Right cardiac atrium (tissue), 5 donors: ENCODE measurements at regions of chr12 and their contacts with region 1.

Region 1: DNA sequence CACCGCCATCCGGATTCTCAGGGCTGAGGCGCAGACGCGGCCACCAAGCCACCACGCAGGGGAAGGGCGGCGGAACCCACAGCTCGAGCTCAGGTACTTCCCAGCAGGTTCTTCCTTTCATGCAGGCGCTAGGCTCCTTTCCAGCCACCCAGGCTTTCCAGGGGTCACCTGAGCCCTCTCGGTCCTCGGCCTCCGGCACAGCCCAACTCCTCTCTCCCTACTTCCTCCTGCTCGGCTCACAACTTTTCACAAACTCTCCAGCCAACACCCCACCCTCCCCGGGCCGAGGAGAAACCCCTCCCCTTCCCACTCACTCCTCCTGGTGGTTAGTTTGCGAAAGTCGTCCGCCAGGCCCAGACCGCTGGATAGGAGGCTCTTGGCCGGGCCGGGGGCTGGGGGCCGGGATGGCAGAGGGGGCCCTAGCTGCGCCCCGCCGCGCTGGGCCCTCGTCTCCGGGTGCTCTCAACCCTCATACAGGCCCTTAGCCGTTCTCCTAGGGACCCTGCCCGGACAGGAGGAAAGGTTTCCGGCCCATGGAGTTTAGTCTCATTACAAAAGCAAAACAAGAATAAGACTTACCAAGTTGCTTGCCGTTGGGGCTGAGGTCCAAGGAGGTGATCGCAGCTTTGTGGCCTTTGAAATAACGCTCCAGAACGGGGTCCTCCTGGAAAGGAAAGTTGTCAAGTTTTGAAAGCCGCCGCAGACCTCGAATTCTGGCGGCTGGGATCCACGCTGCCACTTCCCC is at the start of gene GALNT4:
- DNase-seq: peak; percentile 87 to 94 (median 93)
- ATAC-seq: peak; percentile 94 to 96
- H3K4me3 ChIP-seq: peak within 1 kb of the TSS; percentile 95
- H3K27ac ChIP-seq: peak within 1 kb of the TSS; percentile 92
- H3K4me1 ChIP-seq: peaks cover 3% of the 10 kb centered on the region
- H3K27me3 ChIP-seq: no peaks in the 10 kb centered on the region
- total RNA-seq, gene GALNT4: 3.3 to 5.2 (median 4.0) TPM

Region 2: GRCh38 chr12:89019408-89020120 is 505.1 kb before region 1 on chr12:
- intact Hi-C with region 1: loop called (anchors 2 to 10 kb)
- DNase-seq: peak; percentile 65 to 74 (median 66)
- ATAC-seq: peak; percentile 96 to 97
- H3K4me3 ChIP-seq: peak overlapping the region; percentile 60
- H3K27ac ChIP-seq: no peak overlapping the region
- H3K4me1 ChIP-seq: no peaks in the 10 kb centered on the region
- H3K27me3 ChIP-seq: no peaks in the 10 kb centered on the region

Region 3: DNA sequence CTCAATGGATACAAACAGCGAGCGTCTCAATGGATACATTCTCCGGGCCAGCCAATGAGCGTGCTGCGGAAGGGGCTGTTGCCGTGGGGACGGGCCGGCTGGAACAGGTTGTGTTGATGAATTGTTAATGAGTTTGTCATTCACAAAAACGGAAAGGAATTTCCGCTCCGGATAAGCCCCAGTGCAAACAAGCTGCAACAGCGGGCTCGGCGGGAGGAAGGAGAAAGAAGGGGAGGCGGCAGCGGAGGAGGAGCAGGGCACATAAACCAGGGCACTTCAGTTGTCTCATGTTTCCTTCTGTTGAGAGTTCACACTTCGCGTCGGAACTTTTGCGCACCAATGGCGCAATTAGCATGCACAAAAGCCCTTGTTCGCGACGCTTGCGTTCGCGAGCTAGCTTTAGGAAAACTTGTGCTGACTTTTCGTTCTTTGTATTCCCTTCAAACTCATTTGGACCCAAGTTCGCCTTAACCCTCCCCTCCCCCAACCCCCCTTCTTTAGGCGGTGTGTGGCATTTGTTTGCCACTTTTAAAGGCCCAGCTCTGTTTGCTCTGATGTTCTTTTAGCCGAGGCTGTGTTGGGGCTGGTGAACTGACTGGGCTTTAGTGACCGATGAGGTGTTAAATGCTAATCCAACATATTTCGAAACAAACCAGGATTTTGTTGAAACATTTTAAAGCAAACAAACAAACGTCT is 172.1 kb before region 1 on chr12 and contains the start of gene DUSP6:
- intact Hi-C with region 1: loop called in 1 of 4 experiments (anchors 10 kb)
- DNase-seq: peak; percentile 94 to 96 (median 96)
- ATAC-seq: peak; percentile 84 to 88
- H3K4me3 ChIP-seq: peak within 1 kb of the TSS; percentile 60
- H3K27ac ChIP-seq: peak within 1 kb of the TSS; percentile 88
- H3K4me1 ChIP-seq: peaks cover 3% of the 10 kb centered on the region
- H3K27me3 ChIP-seq: no peaks in the 10 kb centered on the region
- total RNA-seq, gene DUSP6: 18.6 to 27.8 (median 24.1) TPM

Region 4: DNA sequence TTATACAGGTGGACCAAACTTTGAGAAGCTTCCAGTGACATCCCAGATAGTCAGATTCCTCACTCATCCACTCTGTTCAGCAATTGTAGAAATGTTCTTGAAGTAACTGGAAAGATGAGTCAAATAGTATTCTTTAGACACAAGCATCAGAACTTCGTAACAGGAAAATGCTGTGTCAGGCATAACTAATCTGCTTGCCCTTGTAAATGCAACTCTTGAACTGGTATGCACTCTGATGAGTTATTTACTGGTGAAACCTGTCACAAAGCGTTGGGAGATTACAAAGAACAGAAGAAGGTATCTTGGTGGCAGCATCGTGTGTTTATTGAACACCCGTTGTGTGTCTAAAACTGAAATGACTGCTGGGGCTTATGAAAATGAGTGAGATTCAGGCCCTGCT is 161.6 kb before region 1 on chr12:
- intact Hi-C with region 1: loop called in 2 of 4 experiments (anchors 10 kb)
- DNase-seq: no peak
- ATAC-seq: peak; percentile 38 to 41
- H3K4me3 ChIP-seq: no peak overlapping the region
- H3K27ac ChIP-seq: peak overlapping the region; percentile 61
- H3K4me1 ChIP-seq: peaks cover 2% of the 10 kb centered on the region
- H3K27me3 ChIP-seq: no peaks in the 10 kb centered on the region

Region 5: GRCh38 chr12:89470741-89471509 is 53.8 kb before region 1 on chr12:
- intact Hi-C with region 1: loop called in 3 of 4 experiments (anchors 2 to 5 kb)
- DNase-seq: no peak
- ATAC-seq: peak; percentile 83 to 85
- H3K4me3 ChIP-seq: no peak overlapping the region
- H3K27ac ChIP-seq: no peak overlapping the region
- H3K4me1 ChIP-seq: no peaks in the 10 kb centered on the region
- H3K27me3 ChIP-seq: no peaks in the 10 kb centered on the region

Region 6: GRCh38 chr12:89481213-89481914 is 43.3 kb before region 1 on chr12:
- intact Hi-C with region 1: loop called in 1 of 4 experiments (anchors 5 kb)
- DNase-seq: no peak
- ATAC-seq: peak; percentile 77 to 82
- H3K4me3 ChIP-seq: no peak overlapping the region
- H3K27ac ChIP-seq: no peak overlapping the region
- H3K4me1 ChIP-seq: no peaks in the 10 kb centered on the region
- H3K27me3 ChIP-seq: no peaks in the 10 kb centered on the region